IMR-90 (cell line): ENCODE measurements at regions of chr17 and their contacts with region 1.

Region 1: GRCh38 chr17:76072148-76072858 is at the start of gene SRP68:
- DNase-seq: peak; percentile 91
- ATAC-seq: peak; percentile 100
- H3K4me3 ChIP-seq: peak within 1 kb of the TSS; percentile 93
- H3K27ac ChIP-seq: peak within 1 kb of the TSS; percentile 76
- H3K4me1 ChIP-seq: peaks cover 3% of the 10 kb centered on the region; the same call in 1 of the 2 replicates
- H3K27me3 ChIP-seq: peaks cover 36% of the 10 kb centered on the region
- CTCF ChIP-seq: no peak
- POLR2A ChIP-seq: peak; percentile 82
- RAD21 ChIP-seq: no peak
- total RNA-seq, gene SRP68: 47.1 and 47.2 TPM in 2 replicates

Region 2: GRCh38 chr17:75779231-75779986 is 292.9 kb before region 1 on chr17:
- CTCF ChIA-PET with region 1: no interaction called
- POLR2A ChIA-PET with region 1: no interaction called
- dilution Hi-C with region 1: no loop called
- in situ Hi-C with region 1: no loop called
- intact Hi-C with region 1: no loop called
- DNase-seq: peak; percentile 100
- ATAC-seq: peak; percentile 75
- H3K4me3 ChIP-seq: peak overlapping the region; percentile 62
- H3K27ac ChIP-seq: peak overlapping the region; percentile 86
- H3K4me1 ChIP-seq: peaks cover 6% of the 10 kb centered on the region
- H3K27me3 ChIP-seq: no peaks in the 10 kb centered on the region
- CTCF ChIP-seq: no peak
- POLR2A ChIP-seq: peak; percentile 100
- RAD21 ChIP-seq: no peak

Region 3: GRCh38 chr17:76036497-76037261 is 35.6 kb before region 1 on chr17:
- CTCF ChIA-PET with region 1: no interaction called
- POLR2A ChIA-PET with region 1: no interaction called
- dilution Hi-C with region 1: no loop called
- in situ Hi-C with region 1: no loop called
- intact Hi-C with region 1: loop called (anchors 5 kb)
- DNase-seq: peak; percentile 17
- ATAC-seq: peak; percentile 61
- H3K4me3 ChIP-seq: no peak overlapping the region
- H3K27ac ChIP-seq: no peak overlapping the region
- H3K4me1 ChIP-seq: no peaks in the 10 kb centered on the region
- H3K27me3 ChIP-seq: no peaks in the 10 kb centered on the region
- CTCF ChIP-seq: no peak
- POLR2A ChIP-seq: no peak
- RAD21 ChIP-seq: no peak

Region 4: DNA sequence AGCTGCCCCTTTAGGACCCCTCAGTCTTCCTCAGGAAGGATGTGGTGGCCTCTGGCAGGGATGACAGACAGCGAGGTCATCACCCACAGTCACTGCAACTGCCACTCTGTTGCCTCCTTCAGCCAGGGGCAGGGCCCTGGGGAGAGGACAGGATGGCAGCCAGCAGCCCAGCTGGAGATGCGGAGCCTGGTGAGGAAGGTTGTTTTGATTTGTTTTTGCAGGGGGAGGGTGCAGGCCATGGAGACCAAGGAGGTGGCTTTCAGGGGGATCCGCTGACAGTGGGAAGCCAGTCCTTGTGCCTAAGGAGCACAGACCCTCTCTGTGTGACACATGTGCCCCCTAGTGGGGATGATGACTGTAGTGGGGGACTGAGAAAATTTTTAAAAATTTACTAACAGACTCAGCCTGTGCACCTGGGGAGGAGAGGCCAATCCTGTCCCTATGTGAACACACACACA is 474.9 kb after region 1 on chr17:
- CTCF ChIA-PET with region 1: no interaction called
- POLR2A ChIA-PET with region 1: no interaction called
- dilution Hi-C with region 1: no loop called
- in situ Hi-C with region 1: no loop called
- intact Hi-C with region 1: no loop called
- DNase-seq: peak; percentile 85
- ATAC-seq: peak; percentile 79
- H3K4me3 ChIP-seq: no peak overlapping the region
- H3K27ac ChIP-seq: peak overlapping the region; percentile 38
- H3K4me1 ChIP-seq: peaks cover 20% of the 10 kb centered on the region
- H3K27me3 ChIP-seq: no peaks in the 10 kb centered on the region
- CTCF ChIP-seq: peak; percentile 88
- POLR2A ChIP-seq: no peak
- RAD21 ChIP-seq: peak; percentile 85